Ovary (tissue), 10 donors: ENCODE measurements at regions of chr17 and their contacts with region 1.

Region 1: GRCh38 chr17:298791-299450 is 53.7 kb downstream of the RPH3AL start:
- DNase-seq: peak; percentile 81 to 90 (median 84)
- H3K4me3 ChIP-seq: no peak overlapping the region
- H3K27ac ChIP-seq: peak overlapping the region; percentile 58 to 73
- H3K4me1 ChIP-seq: peaks cover 13% of the 10 kb centered on the region
- H3K27me3 ChIP-seq: no peaks in the 10 kb centered on the region
- CTCF ChIP-seq: no peak
- EP300 ChIP-seq: no peak
- POLR2A ChIP-seq: no peak

Region 2: DNA sequence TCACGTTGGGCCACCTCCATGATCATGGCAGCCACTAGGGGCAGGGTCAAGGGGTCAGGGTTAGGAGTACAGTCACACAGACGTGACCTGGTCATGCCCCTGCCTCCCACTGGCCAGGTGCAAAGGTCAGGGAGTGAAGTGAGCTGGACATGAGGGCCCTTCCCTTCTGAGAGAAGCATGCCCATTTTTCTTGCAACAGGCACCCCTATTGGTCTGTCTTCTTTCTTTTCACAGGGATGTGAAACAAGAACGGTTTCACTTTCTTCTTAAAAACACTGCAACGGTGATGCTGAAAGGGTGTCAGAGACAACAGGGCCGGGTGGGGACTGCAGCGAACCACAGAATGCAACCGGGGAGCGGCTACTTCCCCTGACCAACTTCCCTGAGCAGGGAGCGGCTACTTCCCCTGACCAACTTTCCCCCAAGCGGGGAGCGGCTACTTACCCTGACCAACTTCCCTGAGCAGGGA is 65.4 kb before region 1 on chr17:
- intact Hi-C with region 1: loop called in 1 of 4 experiments (anchors 10 kb)
- DNase-seq: peak in 2 of 5 donors; percentile 21 to 24
- H3K4me3 ChIP-seq: no peak overlapping the region
- H3K27ac ChIP-seq: no peak overlapping the region
- H3K4me1 ChIP-seq: no peaks in the 10 kb centered on the region
- H3K27me3 ChIP-seq: no peaks in the 10 kb centered on the region
- CTCF ChIP-seq: no peak
- EP300 ChIP-seq: no peak
- POLR2A ChIP-seq: no peak

Region 3: DNA sequence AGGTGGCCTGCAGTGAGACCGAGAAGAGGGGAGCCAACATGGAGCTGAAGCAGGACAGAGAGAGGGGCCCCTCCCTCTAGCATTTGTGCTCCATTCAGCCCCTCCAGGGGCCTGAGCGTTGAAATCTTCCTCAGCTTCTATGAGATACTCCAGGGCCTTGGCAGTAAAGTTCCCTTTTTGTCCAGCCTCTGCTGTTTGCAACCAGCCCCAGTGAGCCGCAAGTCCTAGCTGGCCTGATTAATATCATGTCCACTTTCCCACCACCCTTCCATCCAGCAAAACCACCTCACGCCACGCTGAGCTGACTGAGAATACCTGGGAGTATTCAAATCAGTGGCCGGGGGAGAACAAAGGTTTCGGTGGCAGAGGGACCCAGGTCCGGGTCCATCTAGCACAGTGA is 65.4 kb after region 1 on chr17:
- intact Hi-C with region 1: no loop called
- DNase-seq: peak in 1 of 5 donors; percentile 14
- H3K4me3 ChIP-seq: no peak overlapping the region
- H3K27ac ChIP-seq: no peak overlapping the region
- H3K4me1 ChIP-seq: no peaks in the 10 kb centered on the region
- H3K27me3 ChIP-seq: no peaks in the 10 kb centered on the region
- CTCF ChIP-seq: no peak
- EP300 ChIP-seq: no peak
- POLR2A ChIP-seq: no peak

Region 4: DNA sequence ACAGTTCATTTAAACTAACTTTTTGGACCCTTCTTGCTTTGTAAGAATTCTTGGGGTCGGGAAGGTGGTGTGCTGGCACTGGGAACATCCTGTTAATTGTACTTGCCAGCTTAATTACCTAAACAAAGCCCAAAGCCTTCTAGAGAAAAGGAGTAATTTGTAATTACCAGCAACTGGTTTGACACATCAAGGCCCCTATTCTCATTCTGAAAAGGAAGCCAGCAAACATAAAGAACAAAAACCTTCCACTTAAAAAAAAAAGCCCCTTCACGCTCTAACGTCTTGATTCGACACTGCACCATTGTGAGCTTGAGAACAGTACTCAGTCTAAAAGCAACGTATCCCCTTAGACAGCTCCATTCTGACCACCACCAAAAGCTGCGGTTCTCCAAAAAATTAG is 128.4 kb after region 1 on chr17:
- intact Hi-C with region 1: no loop called
- DNase-seq: no peak
- H3K4me3 ChIP-seq: no peak overlapping the region
- H3K27ac ChIP-seq: no peak overlapping the region
- H3K4me1 ChIP-seq: no peaks in the 10 kb centered on the region
- H3K27me3 ChIP-seq: no peaks in the 10 kb centered on the region
- CTCF ChIP-seq: no peak
- EP300 ChIP-seq: no peak
- POLR2A ChIP-seq: no peak

Region 5: DNA sequence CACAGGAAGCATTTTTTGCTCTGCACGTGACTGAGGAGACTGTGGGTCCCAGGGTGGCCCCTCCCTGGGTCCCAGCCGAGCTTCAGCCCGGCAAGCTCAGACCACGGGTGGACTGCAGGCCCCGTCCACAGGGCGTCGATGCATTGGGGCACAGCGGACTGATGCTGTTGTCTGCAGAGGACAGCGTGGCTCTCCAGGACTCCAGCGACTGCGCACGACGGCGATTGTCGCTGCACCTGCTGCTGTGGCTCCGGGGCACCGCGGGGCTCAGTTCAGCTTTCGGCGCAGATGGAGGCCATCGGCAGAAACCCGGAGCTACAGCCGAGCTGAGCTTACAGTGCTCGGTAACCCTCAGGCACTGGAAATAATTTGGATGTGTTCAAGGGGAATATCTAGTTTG is 142.2 kb after region 1 on chr17:
- intact Hi-C with region 1: no loop called
- DNase-seq: no peak
- H3K4me3 ChIP-seq: no peak overlapping the region
- H3K27ac ChIP-seq: no peak overlapping the region
- H3K4me1 ChIP-seq: no peaks in the 10 kb centered on the region
- H3K27me3 ChIP-seq: no peaks in the 10 kb centered on the region
- CTCF ChIP-seq: no peak
- EP300 ChIP-seq: no peak
- POLR2A ChIP-seq: no peak

Region 6: GRCh38 chr17:596763-597644 is 298.1 kb after region 1 on chr17:
- intact Hi-C with region 1: no loop called
- DNase-seq: no peak
- H3K4me3 ChIP-seq: no peak overlapping the region
- H3K27ac ChIP-seq: no peak overlapping the region
- H3K4me1 ChIP-seq: no peaks in the 10 kb centered on the region
- H3K27me3 ChIP-seq: no peaks in the 10 kb centered on the region
- CTCF ChIP-seq: no peak
- EP300 ChIP-seq: no peak
- POLR2A ChIP-seq: no peak